ENCODE measurements at regions of chr20 and their contacts with region 1.

Region 1: GRCh38 chr20:52076164-52076563 is 115.4 kb downstream of the ZFP64 start:
- DNase-seq: no peak
- ATAC-seq: no peak
- H3K4me3 ChIP-seq: no peak overlapping the region
- H3K27ac ChIP-seq: no peak overlapping the region
- H3K4me1 ChIP-seq: no peaks in the 10 kb centered on the region
- H3K27me3 ChIP-seq: no peaks in the 10 kb centered on the region
- CTCF ChIP-seq: no peak
- POLR2A ChIP-seq: no peak

Region 2: DNA sequence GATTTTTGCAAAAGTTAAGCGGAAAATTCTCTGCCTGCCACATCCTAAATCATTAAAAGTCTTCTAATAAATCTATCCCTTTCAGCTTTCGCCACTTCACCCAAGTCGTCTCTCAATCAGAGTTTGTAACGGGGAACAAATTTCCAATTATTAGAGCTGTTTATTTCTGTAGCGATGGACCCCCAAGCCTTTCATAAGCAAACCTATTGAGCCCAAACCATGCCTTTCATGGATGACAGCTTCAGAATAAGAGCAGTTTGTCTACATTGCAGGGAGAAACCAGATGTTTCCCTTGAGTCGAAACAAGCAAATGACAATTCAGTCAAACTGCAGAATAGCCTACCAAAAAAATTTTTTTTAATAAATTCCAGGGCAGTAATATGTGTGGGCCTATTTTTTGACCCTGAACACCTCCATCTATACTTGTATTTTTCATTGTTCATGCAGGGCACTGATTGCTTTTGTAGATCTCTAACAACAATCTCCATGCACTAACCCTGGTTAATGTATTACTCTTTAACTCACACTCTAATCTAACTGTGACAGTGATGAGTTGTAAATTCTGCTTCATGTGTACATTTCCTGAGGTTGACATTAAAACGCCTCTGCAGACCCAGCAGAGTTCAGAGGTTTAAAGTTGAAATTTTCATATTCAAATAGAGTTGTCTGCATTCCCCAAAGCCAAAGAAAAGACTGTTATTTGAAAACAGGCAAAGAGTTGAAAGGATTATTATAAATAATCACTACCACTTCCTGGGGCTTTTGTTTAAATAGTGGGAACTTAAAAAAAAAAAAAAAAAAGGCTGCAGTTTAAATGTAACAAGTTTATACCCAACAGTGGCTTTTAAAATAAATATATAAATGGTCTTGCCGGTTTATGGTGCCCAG is 372.5 kb before region 1 on chr20:
- intact Hi-C with region 1: loop called in 8 of 10 experiments (anchors 5 to 10 kb)
- DNase-seq: no peak
- ATAC-seq: no peak
- H3K4me3 ChIP-seq: no peak overlapping the region
- H3K27ac ChIP-seq: no peak overlapping the region
- H3K4me1 ChIP-seq: no peaks in the 10 kb centered on the region
- H3K27me3 ChIP-seq: no peaks in the 10 kb centered on the region
- CTCF ChIP-seq: no peak
- POLR2A ChIP-seq: no peak

Region 3: DNA sequence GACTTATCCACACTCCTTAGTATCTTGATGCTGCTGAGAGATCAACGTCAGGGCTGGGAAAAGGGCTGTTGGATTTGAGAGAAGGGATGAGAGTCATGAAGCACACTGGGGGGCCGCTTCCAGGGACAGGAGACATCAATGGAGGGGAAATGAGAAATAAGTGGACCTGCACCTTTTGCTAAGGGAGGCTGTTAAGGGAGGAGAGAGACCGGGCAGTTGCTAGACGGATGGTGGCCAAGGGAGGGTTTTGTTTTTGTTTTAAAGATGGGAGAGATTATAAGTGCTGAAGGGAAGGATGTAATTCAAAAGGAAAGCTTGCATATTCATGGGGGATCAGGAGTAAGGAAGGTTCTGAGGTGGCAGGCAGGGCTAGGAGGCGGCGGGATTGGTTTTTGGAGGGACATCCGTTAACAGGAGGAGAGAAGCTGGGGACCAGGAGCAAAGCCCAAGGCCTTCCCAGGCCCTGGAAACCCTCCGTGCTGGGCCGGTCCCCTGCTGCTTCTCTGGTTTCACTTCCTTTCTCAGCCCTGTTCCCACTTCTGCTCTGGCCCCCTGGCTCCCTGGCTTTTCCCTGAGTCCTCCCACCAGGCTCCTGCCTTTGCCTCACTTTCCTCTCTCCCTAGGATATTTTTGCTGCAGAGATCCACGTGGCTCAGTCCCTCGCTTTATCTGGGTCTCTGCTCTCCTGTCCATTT is 247.6 kb before region 1 on chr20:
- intact Hi-C with region 1: no loop called
- DNase-seq: no peak
- ATAC-seq: no peak
- H3K4me3 ChIP-seq: no peak overlapping the region
- H3K27ac ChIP-seq: no peak overlapping the region
- H3K4me1 ChIP-seq: no peaks in the 10 kb centered on the region
- H3K27me3 ChIP-seq: peaks cover 0 to 4% (median 0%) of the 10 kb centered on the region in 9 donors
- CTCF ChIP-seq: no peak
- POLR2A ChIP-seq: no peak

Region 4: GRCh38 chr20:51978081-51978501 is 98.1 kb before region 1 on chr20:
- intact Hi-C with region 1: no loop called
- DNase-seq: no peak
- ATAC-seq: no peak
- H3K4me3 ChIP-seq: no peak overlapping the region
- H3K27ac ChIP-seq: no peak overlapping the region
- H3K4me1 ChIP-seq: no peaks in the 10 kb centered on the region
- H3K27me3 ChIP-seq: no peaks in the 10 kb centered on the region
- CTCF ChIP-seq: no peak
- POLR2A ChIP-seq: no peak

Region 5: GRCh38 chr20:52012079-52012478 is 64.1 kb before region 1 on chr20:
- intact Hi-C with region 1: no loop called
- DNase-seq: no peak
- ATAC-seq: no peak
- H3K4me3 ChIP-seq: no peak overlapping the region
- H3K27ac ChIP-seq: no peak overlapping the region
- H3K4me1 ChIP-seq: no peaks in the 10 kb centered on the region
- H3K27me3 ChIP-seq: peaks cover 0 to 2% (median 0%) of the 10 kb centered on the region in 9 donors
- CTCF ChIP-seq: no peak
- POLR2A ChIP-seq: no peak

Measured in heart left ventricle (tissue), 16 donors.